Dendritic cell treated with granulocyte-macrophage colony-stimulating factor and Interleukin-4, amounts not matched to agents 40 ng/mL and 50 ng/mL, for 4 days (primary cell): ENCODE measurements at regions of chr19 and their contacts with region 1.

Region 1: GRCh38 chr19:9323919-9324583 is at the start of gene ZNF559:
- H3K4me3 Mint-ChIP-seq: peak within 1 kb of the TSS; percentile 93
- H3K27ac Mint-ChIP-seq: peak within 1 kb of the TSS; percentile 92
- H3K4me1 Mint-ChIP-seq: peaks cover 17% of the 10 kb centered on the region
- H3K27me3 Mint-ChIP-seq: peaks cover 1% of the 10 kb centered on the region

Region 2: GRCh38 chr19:9309139-9309973 is 14.7 kb before region 1 on chr19 and contains the start of gene ZNF699:
- intact Hi-C with region 1: loop called (anchors 1 kb)
- H3K4me3 Mint-ChIP-seq: peak within 1 kb of the TSS; percentile 92
- H3K27ac Mint-ChIP-seq: peak within 1 kb of the TSS; percentile 98
- H3K4me1 Mint-ChIP-seq: peaks cover 22% of the 10 kb centered on the region
- H3K27me3 Mint-ChIP-seq: peaks cover 2% of the 10 kb centered on the region